Activated CD4-positive, alpha-beta memory T cell treated with anti-CD3 and anti-CD28 coated beads, Interleukin-2, amount 10 ng/mL, durations not matched to agents 7 days and 5 days (primary cell): ENCODE measurements at regions of chr5 and their contacts with region 1.

Region 1: DNA sequence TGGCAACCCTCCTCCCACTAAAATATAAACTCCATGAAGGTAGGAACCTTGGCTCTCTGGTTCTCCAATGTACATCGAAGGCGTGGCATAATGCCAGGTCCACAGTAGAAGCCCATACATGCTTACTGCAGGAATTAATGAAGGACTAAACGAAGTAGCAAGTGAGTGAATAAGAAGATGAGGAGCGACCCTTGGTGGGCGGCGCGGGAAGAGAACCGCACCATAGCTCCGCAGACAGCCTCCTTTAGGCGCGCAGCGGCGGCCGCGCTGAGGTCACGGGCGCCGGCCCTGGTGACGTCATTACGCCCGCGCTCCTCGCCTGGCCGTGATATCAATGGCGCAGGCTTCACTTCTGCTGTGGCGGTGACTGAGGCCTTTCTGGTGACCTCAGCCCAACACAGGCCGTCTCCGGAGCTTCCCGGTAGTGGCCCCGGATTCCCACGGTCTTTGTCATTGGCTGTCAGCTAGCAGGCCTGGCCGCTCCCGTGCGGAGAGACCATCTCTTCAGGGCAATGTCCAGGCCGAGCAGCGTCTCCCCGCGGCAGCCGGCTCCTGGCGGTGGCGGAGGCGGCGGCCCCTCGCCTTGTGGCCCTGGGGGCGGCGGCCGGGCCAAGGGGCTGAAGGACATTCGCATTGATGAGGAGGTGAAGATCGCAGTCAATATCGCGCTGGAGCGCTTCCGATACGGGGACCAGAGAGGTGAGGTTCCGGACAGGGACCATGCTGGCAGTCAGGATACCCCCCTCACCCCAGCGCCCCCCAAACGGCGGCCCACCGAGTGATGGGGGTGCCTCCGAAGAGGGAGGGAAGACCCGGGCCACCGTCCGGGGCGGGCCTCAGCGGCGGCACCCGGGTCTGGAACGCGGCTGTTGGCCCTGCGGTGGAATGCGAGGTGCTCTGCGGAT is at the start of gene YTHDC2:
- DNase-seq: peak; percentile 90
- H3K4me3 Mint-ChIP-seq: peak within 1 kb of the TSS; percentile 86
- H3K27ac Mint-ChIP-seq: peak within 1 kb of the TSS; percentile 76
- H3K4me1 Mint-ChIP-seq: peaks cover 25% of the 10 kb centered on the region
- H3K27me3 Mint-ChIP-seq: peaks cover 12% of the 10 kb centered on the region
- total RNA-seq, gene YTHDC2: 30.3 to 31.0 TPM

Region 2: GRCh38 chr5:113330533-113331208 is 183.0 kb before region 1 on chr5:
- CTCF ChIA-PET with region 1: interaction called, 118 read pairs
- POLR2A ChIA-PET with region 1: interaction called, 9 read pairs
- DNase-seq: no peak
- H3K4me3 Mint-ChIP-seq: no peak overlapping the region
- H3K27ac Mint-ChIP-seq: no peak overlapping the region
- H3K4me1 Mint-ChIP-seq: peaks cover 19% of the 10 kb centered on the region
- H3K27me3 Mint-ChIP-seq: peaks cover 2% of the 10 kb centered on the region

Region 3: GRCh38 chr5:113378959-113379541 is 134.6 kb before region 1 on chr5:
- CTCF ChIA-PET with region 1: interaction called, 26 read pairs
- POLR2A ChIA-PET with region 1: interaction called, 4 read pairs
- DNase-seq: peak; percentile 65
- H3K4me3 Mint-ChIP-seq: peak overlapping the region; percentile 2
- H3K27ac Mint-ChIP-seq: peak overlapping the region; percentile 44
- H3K4me1 Mint-ChIP-seq: peaks cover 46% of the 10 kb centered on the region
- H3K27me3 Mint-ChIP-seq: no peaks in the 10 kb centered on the region

Region 4: DNA sequence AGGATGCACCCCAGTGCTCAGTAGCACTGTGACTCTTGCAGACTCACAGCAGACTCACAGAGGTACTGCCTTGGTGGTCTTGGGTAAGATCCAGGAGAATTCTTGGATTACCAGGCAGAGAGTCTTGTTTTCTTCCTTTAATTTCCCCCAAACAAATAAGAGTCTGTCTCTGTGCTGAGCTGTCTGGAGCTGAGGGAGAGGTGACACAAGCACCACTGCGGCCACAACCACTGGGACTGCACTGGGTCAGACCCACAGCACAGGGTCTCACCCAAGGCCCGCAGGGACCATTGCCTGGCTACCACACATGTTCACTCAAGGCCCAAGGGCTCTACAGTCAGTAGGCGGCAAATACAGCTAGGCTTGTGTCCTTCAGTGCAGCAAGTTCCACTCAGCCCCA is 11.6 kb before region 1 on chr5:
- CTCF ChIA-PET with region 1: no interaction called
- POLR2A ChIA-PET with region 1: no interaction called
- DNase-seq: no peak
- H3K4me3 Mint-ChIP-seq: no peak overlapping the region
- H3K27ac Mint-ChIP-seq: no peak overlapping the region
- H3K4me1 Mint-ChIP-seq: peaks cover 7% of the 10 kb centered on the region
- H3K27me3 Mint-ChIP-seq: peaks cover 39% of the 10 kb centered on the region

Region 5: DNA sequence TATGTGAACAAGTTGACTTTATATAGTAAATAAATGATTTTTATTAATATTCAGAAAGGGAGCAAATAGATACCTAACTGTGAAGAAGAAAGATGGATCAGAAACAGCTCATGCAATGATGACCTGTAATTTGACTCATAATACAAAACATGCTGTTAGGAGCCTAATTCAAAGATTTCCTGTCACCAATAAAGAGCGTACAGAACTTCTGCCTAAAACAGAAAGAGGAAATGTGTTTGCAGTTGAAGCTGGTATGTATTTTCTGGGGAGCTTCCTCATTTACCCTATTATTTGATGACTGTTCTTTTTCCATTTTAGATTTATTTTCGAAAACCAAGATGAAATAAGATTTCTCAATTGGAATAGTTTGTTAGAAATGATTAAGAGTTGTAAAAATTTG is 11.3 kb after region 1 on chr5:
- CTCF ChIA-PET with region 1: interaction called, 6 read pairs
- POLR2A ChIA-PET with region 1: interaction called, 12 read pairs
- DNase-seq: no peak
- H3K4me3 Mint-ChIP-seq: no peak overlapping the region
- H3K27ac Mint-ChIP-seq: peak overlapping the region; percentile 64
- H3K4me1 Mint-ChIP-seq: peaks cover 31% of the 10 kb centered on the region
- H3K27me3 Mint-ChIP-seq: no peaks in the 10 kb centered on the region